Esophagus squamous epithelium (tissue), 5 donors: ENCODE measurements at regions of chr21 and their contacts with region 1.

Region 1: GRCh38 chr21:43938751-43939442 is 73.2 kb upstream of the TRAPPC10 start:
- DNase-seq: peak; percentile 13
- H3K4me3 ChIP-seq: peak overlapping the region; percentile 12 to 63 (median 43)
- H3K27ac ChIP-seq: peak overlapping the region; percentile 48 to 70 (median 64)
- H3K4me1 ChIP-seq: peaks cover 7 to 36% (median 14%) of the 10 kb centered on the region in 3 donors
- H3K27me3 ChIP-seq: no peaks in the 10 kb centered on the region
- CTCF ChIP-seq: peak; percentile 88 to 98 (median 94)
- POLR2A ChIP-seq: no peak

Region 2: GRCh38 chr21:43805275-43805800 is 133.6 kb before region 1 on chr21:
- intact Hi-C with region 1: loop called (anchors 5 kb)
- DNase-seq: no peak
- H3K4me3 ChIP-seq: no peak overlapping the region
- H3K27ac ChIP-seq: no peak overlapping the region
- H3K4me1 ChIP-seq: peaks cover 16 to 21% (median 17%) of the 10 kb centered on the region in 3 donors
- H3K27me3 ChIP-seq: no peaks in the 10 kb centered on the region
- CTCF ChIP-seq: no peak
- POLR2A ChIP-seq: no peak

Region 3: GRCh38 chr21:43866260-43866629 is 72.7 kb before region 1 on chr21:
- intact Hi-C with region 1: loop called (anchors 10 kb)
- DNase-seq: no peak
- H3K4me3 ChIP-seq: peak overlapping the region; percentile 68 to 98 (median 96)
- H3K27ac ChIP-seq: peak overlapping the region; percentile 76 to 99 (median 92)
- H3K4me1 ChIP-seq: peaks cover 20 to 59% (median 26%) of the 10 kb centered on the region in 3 donors
- H3K27me3 ChIP-seq: no peaks in the 10 kb centered on the region
- CTCF ChIP-seq: no peak
- POLR2A ChIP-seq: no peak